ENCODE measurements at regions of chr18 and their contacts with region 1.

Region 1: DNA sequence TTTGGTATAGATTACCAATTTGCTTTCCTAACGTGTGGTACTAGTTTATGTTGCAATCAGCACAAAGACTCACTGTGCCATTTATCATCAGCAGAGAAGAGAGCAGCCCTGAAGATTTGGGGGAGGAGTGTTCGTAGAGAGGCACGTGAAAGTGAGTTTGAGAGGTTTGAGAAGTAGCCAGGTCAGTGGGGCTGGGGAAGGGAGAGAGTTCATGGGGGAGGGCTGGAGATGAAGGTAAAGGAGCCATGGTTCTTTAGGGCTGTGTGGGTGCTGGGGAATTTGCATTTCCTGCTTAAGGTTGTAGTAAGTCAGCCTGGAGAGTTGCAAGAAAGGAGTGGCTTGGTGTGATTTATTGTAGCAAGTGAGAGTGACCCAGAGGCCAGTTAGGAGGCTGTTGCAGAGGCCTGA is 172.0 kb downstream of the NEDD4L start:
- DNase-seq: no peak
- ATAC-seq: no peak
- H3K4me3 ChIP-seq: no peak overlapping the region
- H3K4me3 Mint-ChIP-seq: no peak overlapping the region
- H3K27ac ChIP-seq: no peak overlapping the region
- H3K27ac Mint-ChIP-seq: no peak overlapping the region
- H3K4me1 ChIP-seq: peaks cover 10% of the 10 kb centered on the region
- H3K4me1 Mint-ChIP-seq: peaks cover 18% of the 10 kb centered on the region
- H3K27me3 ChIP-seq: no peaks in the 10 kb centered on the region
- H3K27me3 Mint-ChIP-seq: peaks cover 27% of the 10 kb centered on the region
- CTCF ChIP-seq: no peak

Region 2: DNA sequence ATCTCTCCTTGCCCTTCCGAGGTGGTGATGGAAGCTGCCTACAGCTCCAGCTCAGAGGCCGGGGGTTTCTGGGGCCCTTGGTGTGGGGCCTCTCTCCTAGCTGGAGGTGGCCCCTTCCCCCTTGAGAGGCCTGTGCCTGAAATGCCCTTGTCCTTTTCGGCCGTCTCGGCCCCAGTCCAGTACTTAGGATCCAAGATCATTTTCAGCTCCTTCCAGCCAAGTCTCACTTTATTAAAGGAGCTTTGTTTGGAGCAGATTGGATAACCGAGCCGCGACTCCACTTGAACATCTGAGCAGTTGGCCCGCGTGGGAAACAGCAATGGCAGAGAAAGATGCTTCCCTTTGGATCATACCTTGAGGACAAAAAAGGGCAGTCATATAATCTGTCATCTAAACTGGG is 47.1 kb before region 1 on chr18:
- CTCF ChIA-PET with region 1: no interaction called
- POLR2A ChIA-PET with region 1: no interaction called
- intact Hi-C with region 1: loop called in 1 of 2 experiments (anchors 5 kb)
- DNase-seq: no peak
- ATAC-seq: no peak
- H3K4me3 ChIP-seq: no peak overlapping the region
- H3K4me3 Mint-ChIP-seq: no peak overlapping the region
- H3K27ac ChIP-seq: no peak overlapping the region
- H3K27ac Mint-ChIP-seq: no peak overlapping the region
- H3K4me1 ChIP-seq: no peaks in the 10 kb centered on the region
- H3K4me1 Mint-ChIP-seq: no peaks in the 10 kb centered on the region
- H3K27me3 ChIP-seq: peaks cover 0 to 8% of the 10 kb centered on the region in 2 experiments
- H3K27me3 Mint-ChIP-seq: peaks cover 7% of the 10 kb centered on the region
- CTCF ChIP-seq: no peak

Region 3: GRCh38 chr18:58231930-58232329 is 15.9 kb after region 1 on chr18:
- CTCF ChIA-PET with region 1: no interaction called
- POLR2A ChIA-PET with region 1: no interaction called
- intact Hi-C with region 1: no loop called
- DNase-seq: no peak
- ATAC-seq: no peak
- H3K4me3 ChIP-seq: no peak overlapping the region
- H3K4me3 Mint-ChIP-seq: no peak overlapping the region
- H3K27ac ChIP-seq: no peak overlapping the region
- H3K27ac Mint-ChIP-seq: no peak overlapping the region
- H3K4me1 ChIP-seq: no peaks in the 10 kb centered on the region
- H3K4me1 Mint-ChIP-seq: no peaks in the 10 kb centered on the region
- H3K27me3 ChIP-seq: no peaks in the 10 kb centered on the region
- H3K27me3 Mint-ChIP-seq: peaks cover 7% of the 10 kb centered on the region
- CTCF ChIP-seq: no peak